ENCODE measurements at regions of chr12 and their contacts with region 1.

Region 1: DNA sequence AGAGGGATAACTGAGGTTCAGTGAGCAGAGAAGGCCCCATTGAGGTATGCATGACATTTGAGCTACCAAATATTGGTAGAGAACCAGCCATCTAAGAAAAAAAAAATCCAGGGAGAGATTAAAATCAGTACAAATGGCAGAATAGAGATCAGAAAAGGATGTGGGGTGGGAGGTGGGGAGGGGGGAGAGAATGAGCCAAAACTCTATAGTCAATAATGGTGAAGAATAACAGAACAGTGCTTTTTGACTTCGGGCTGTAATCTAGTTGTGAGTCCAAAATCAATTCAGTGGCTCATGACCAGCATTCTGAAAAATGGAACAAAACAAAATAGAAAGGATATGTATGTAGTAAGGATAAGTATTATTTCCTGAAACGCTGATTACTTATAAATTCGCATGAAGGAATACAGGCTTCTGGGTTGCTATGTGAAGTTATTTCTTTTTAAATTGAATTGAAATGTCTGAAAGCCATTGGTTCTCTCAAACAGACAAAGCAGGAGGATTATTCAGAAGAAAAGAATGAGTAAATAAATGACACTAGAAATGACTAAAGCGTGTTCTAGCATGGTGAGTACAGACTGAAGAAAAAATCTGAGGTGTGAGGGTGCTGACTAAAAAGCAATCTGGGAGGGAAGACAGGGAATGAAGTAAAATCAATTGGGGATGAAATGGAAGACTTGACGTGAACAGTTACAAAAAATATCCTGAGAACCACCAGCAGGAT is 72.4 kb downstream of the ATP2B1 start:
- DNase-seq: peak; percentile 27
- ATAC-seq: peak; percentile 88
- H3K4me3 Mint-ChIP-seq: no peak overlapping the region
- H3K27ac Mint-ChIP-seq: peak overlapping the region; percentile 41
- H3K4me1 Mint-ChIP-seq: peaks cover 16% of the 10 kb centered on the region
- H3K27me3 Mint-ChIP-seq: no peaks in the 10 kb centered on the region

Region 2: GRCh38 chr12:89597770-89598169 is 38.4 kb before region 1 on chr12:
- CTCF ChIA-PET with region 1: no interaction called
- POLR2A ChIA-PET with region 1: no interaction called
- intact Hi-C with region 1: loop called in 1 of 2 experiments (anchors 1 kb)
- DNase-seq: no peak
- ATAC-seq: peak; percentile 44
- H3K4me3 Mint-ChIP-seq: peak overlapping the region; percentile 33
- H3K27ac Mint-ChIP-seq: no peak overlapping the region
- H3K4me1 Mint-ChIP-seq: peaks cover 24% of the 10 kb centered on the region
- H3K27me3 Mint-ChIP-seq: no peaks in the 10 kb centered on the region

Region 3: DNA sequence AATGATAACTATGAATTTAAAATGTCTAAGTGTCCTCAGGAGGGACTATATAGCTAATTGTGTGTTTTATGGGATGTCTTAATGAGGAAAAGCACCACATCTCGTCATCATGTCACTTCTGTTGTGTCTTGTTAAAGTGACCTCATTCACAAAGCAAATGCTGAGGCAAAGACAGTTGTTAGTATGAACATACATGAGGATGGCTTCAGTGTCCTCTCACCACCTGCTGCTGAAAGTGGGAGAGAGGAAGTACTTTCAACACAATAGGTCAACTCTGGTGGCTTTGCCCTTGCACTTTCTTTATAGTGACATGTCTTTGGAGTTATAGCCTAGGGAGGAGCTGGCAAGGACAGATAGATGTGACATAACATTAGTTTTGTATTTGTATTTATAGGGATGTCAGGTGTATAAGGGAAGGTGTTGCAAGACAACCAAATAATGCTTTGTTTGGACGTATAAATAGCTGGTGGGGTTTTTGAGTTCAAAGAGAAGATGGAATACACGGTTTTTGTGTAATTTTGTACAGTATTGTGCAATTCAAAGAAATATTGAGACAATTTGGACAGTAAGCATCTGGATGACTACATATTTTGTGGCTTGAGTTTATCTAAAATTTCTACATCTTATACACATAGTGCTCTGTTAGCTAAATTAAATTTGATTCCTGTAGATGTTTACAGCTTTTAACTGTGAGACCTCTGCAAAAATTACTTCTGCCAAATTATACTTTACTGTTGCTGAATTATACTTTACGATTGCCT is 204.1 kb after region 1 on chr12:
- CTCF ChIA-PET with region 1: no interaction called
- POLR2A ChIA-PET with region 1: no interaction called
- intact Hi-C with region 1: no loop called
- DNase-seq: no peak
- ATAC-seq: no peak
- H3K4me3 Mint-ChIP-seq: no peak overlapping the region
- H3K27ac Mint-ChIP-seq: no peak overlapping the region
- H3K4me1 Mint-ChIP-seq: peaks cover 7% of the 10 kb centered on the region
- H3K27me3 Mint-ChIP-seq: no peaks in the 10 kb centered on the region

Measured in activated CD4-positive, alpha-beta T cell treated with anti-CD3 and anti-CD28 coated beads for 36 hours (primary cell).